IMR-90 (cell line): ENCODE measurements at regions of chr12 and their contacts with region 1.

Region 1: DNA sequence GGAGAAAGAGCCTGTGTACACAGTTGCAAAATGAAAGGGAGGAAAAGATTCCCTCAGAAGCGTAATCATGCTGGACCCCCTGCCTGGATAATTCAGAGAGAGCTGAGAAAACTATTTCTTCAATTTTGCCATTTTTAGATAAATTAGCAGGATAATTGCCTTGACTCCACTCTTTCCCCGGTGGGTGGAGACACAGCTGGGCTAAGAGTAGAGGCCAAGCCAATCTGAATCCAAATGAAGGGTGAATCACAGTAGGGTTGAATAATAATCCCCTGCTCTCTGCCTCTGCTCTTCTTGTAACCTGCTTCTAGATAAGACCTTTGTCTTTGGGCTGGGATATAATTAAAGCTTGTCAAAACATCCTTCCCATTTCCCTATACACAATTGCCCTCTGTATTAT is 150.1 kb downstream of the CAPZA3 start:
- DNase-seq: no peak
- ATAC-seq: no peak
- H3K4me3 ChIP-seq: no peak overlapping the region
- H3K27ac ChIP-seq: no peak overlapping the region
- H3K4me1 ChIP-seq: no peaks in the 10 kb centered on the region
- H3K27me3 ChIP-seq: no peaks in the 10 kb centered on the region; the same call in 1 of the 2 replicates
- CTCF ChIP-seq: no peak
- POLR2A ChIP-seq: no peak
- RAD21 ChIP-seq: no peak

Region 2: GRCh38 chr12:19613051-19613535 is 725.0 kb after region 1 on chr12:
- CTCF ChIA-PET with region 1: interaction called, 12 read pairs
- POLR2A ChIA-PET with region 1: no interaction called
- dilution Hi-C with region 1: no loop called
- in situ Hi-C with region 1: no loop called
- intact Hi-C with region 1: no loop called
- DNase-seq: no peak
- ATAC-seq: no peak
- H3K4me3 ChIP-seq: no peak overlapping the region
- H3K27ac ChIP-seq: no peak overlapping the region
- H3K4me1 ChIP-seq: no peaks in the 10 kb centered on the region
- H3K27me3 ChIP-seq: no peaks in the 10 kb centered on the region
- CTCF ChIP-seq: no peak
- POLR2A ChIP-seq: no peak
- RAD21 ChIP-seq: no peak